Ovary (tissue), 10 donors: ENCODE measurements at regions of chr19 and their contacts with region 1.

Region 1: DNA sequence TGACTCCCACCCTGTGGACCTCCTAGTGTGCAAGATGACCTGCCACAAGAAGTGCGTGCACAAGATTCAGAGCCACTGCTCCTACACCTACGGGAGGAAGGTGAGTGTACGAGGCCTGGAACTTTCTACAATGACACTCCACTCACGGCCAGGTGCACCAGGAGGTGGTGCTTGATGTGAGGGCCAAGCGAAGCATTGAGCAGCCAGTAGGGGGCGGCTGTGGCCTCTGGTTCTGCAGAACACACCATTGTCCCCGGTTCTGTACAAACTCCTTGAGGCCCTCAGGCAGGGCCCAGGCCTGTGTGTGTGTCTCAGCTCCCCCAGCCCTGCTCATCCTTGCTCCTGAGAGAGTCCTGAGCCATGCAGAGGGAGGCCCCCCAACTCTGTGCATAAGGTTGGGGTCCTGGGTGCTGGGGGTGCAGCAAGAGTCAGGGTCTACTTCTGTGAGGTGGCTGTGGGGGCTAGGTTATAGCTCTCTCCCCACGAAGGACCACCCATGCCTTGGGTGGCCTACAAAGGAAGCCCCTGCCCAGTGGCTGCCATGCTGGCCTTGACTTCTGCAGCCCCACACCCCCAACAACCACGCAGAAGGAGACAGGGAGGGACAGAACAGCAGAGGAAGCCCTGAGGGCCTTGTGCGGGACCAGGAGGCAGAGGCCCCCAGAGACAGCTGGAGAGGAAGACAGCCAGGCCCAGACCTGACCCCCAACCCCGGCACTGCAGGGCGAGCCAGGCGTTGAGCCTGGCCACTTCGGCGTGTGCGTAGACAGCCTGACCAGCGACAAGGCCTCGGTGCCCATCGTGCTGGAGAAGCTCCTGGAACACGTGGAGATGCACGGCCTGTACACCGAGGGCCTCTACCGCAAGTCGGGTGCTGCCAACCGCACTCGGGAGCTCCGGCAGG is 9.7 kb upstream of the USE1 start:
- DNase-seq: peak; percentile 39 to 79 (median 64)
- H3K4me3 ChIP-seq: no peak overlapping the region
- H3K27ac ChIP-seq: no peak overlapping the region
- H3K4me1 ChIP-seq: no peaks in the 10 kb centered on the region
- H3K27me3 ChIP-seq: no peaks in the 10 kb centered on the region
- CTCF ChIP-seq: peak; percentile 18 to 60 (median 52)
- EP300 ChIP-seq: no peak
- POLR2A ChIP-seq: no peak

Region 2: GRCh38 chr19:15841875-15842569 is 1363.5 kb before region 1 on chr19:
- intact Hi-C with region 1: no loop called
- DNase-seq: no peak
- H3K4me3 ChIP-seq: no peak overlapping the region
- H3K27ac ChIP-seq: no peak overlapping the region
- H3K4me1 ChIP-seq: no peaks in the 10 kb centered on the region
- H3K27me3 ChIP-seq: no peaks in the 10 kb centered on the region
- CTCF ChIP-seq: no peak
- EP300 ChIP-seq: no peak
- POLR2A ChIP-seq: no peak

Region 3: GRCh38 chr19:17266975-17267788 is 61.7 kb after region 1 on chr19 and contains the start of gene BABAM1:
- intact Hi-C with region 1: loop called in 2 of 4 experiments (anchors 5 to 10 kb)
- DNase-seq: peak; percentile 91 to 97 (median 93)
- H3K4me3 ChIP-seq: peak within 1 kb of the TSS; percentile 57
- H3K27ac ChIP-seq: peak within 1 kb of the TSS in 1 of 2 donors; percentile 48
- H3K4me1 ChIP-seq: peaks cover 4% of the 10 kb centered on the region
- H3K27me3 ChIP-seq: no peaks in the 10 kb centered on the region
- CTCF ChIP-seq: no peak
- EP300 ChIP-seq: no peak
- POLR2A ChIP-seq: no peak
- total RNA-seq, gene BABAM1: 37.4 to 74.8 (median 57.8) TPM

Region 4: GRCh38 chr19:17275461-17276175 is 70.1 kb after region 1 on chr19:
- intact Hi-C with region 1: loop called (anchors 5 to 10 kb)
- DNase-seq: no peak
- H3K4me3 ChIP-seq: no peak overlapping the region
- H3K27ac ChIP-seq: no peak overlapping the region
- H3K4me1 ChIP-seq: no peaks in the 10 kb centered on the region
- H3K27me3 ChIP-seq: no peaks in the 10 kb centered on the region
- CTCF ChIP-seq: no peak
- EP300 ChIP-seq: no peak
- POLR2A ChIP-seq: no peak